ENCODE measurements at regions of chr17 and their contacts with region 1.

Region 1: GRCh38 chr17:6591599-6592158 is 35.3 kb upstream of the PITPNM3 start:
- DNase-seq: peak; percentile 95
- H3K4me3 Mint-ChIP-seq: peak overlapping the region; percentile 8
- H3K27ac Mint-ChIP-seq: peak overlapping the region; percentile 64
- H3K4me1 Mint-ChIP-seq: peaks cover 21% of the 10 kb centered on the region
- H3K27me3 Mint-ChIP-seq: no peaks in the 10 kb centered on the region
- CTCF ChIP-seq: no peak

Region 2: GRCh38 chr17:6374761-6375312 is 216.8 kb before region 1 on chr17:
- CTCF ChIA-PET with region 1: no interaction called
- POLR2A ChIA-PET with region 1: no interaction called
- intact Hi-C with region 1: no loop called
- DNase-seq: peak; percentile 63
- H3K4me3 Mint-ChIP-seq: no peak overlapping the region
- H3K27ac Mint-ChIP-seq: no peak overlapping the region
- H3K4me1 Mint-ChIP-seq: peaks cover 13% of the 10 kb centered on the region
- H3K27me3 Mint-ChIP-seq: peaks cover 11% of the 10 kb centered on the region
- CTCF ChIP-seq: no peak

Region 3: GRCh38 chr17:6507535-6507934 is 84.1 kb before region 1 on chr17:
- CTCF ChIA-PET with region 1: interaction called, 3 read pairs
- POLR2A ChIA-PET with region 1: interaction called, 11 read pairs
- intact Hi-C with region 1: no loop called
- DNase-seq: peak; percentile 95
- H3K4me3 Mint-ChIP-seq: peak overlapping the region; percentile 38
- H3K27ac Mint-ChIP-seq: peak overlapping the region; percentile 90
- H3K4me1 Mint-ChIP-seq: peaks cover 32% of the 10 kb centered on the region
- H3K27me3 Mint-ChIP-seq: no peaks in the 10 kb centered on the region
- CTCF ChIP-seq: no peak

Region 4: GRCh38 chr17:6548578-6549330 is 42.9 kb before region 1 on chr17:
- CTCF ChIA-PET with region 1: no interaction called
- POLR2A ChIA-PET with region 1: interaction called, 11 read pairs
- intact Hi-C with region 1: no loop called
- DNase-seq: no peak
- H3K4me3 Mint-ChIP-seq: no peak overlapping the region
- H3K27ac Mint-ChIP-seq: no peak overlapping the region
- H3K4me1 Mint-ChIP-seq: peaks cover 42% of the 10 kb centered on the region
- H3K27me3 Mint-ChIP-seq: no peaks in the 10 kb centered on the region
- CTCF ChIP-seq: no peak

Region 5: GRCh38 chr17:6555331-6556120 is 36.2 kb before region 1 on chr17:
- CTCF ChIA-PET with region 1: interaction called, 3 read pairs
- POLR2A ChIA-PET with region 1: interaction called, 11 read pairs
- intact Hi-C with region 1: loop called (anchors 2 kb)
- DNase-seq: peak; percentile 79
- H3K4me3 Mint-ChIP-seq: peak overlapping the region; percentile 80
- H3K27ac Mint-ChIP-seq: peak overlapping the region; percentile 79
- H3K4me1 Mint-ChIP-seq: peaks cover 45% of the 10 kb centered on the region
- H3K27me3 Mint-ChIP-seq: no peaks in the 10 kb centered on the region
- CTCF ChIP-seq: no peak

Region 6: DNA sequence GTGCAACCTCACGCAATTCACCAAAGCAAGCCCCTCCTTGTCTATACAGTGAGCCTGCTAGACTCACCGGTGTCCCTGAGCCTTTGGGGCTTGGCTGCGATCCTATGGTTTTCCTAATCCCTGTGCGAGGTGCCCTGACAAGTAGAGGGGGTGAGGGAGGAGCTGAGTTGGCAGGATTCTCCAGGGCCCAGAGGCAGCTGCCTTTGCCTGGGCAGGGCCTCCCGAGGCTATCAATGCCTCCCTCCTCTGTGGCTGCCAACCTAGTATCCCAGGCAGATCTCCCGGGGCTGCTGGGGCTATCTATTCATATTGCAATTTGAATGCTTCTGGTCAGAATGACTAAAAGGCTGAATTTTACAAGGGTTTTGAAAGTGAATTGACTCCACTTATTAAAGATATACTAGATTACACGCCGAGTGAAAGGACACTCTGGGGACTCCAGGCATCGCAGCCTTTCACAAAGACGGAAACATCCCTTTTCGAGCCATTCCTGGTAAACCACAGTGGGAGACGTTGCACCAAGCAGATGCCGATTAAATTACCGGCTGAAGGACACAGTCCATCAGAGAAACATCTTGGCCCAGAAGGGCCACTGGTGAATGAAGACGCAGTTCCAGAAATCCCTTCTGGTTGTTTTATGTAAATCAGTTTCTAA is 24.0 kb before region 1 on chr17:
- CTCF ChIA-PET with region 1: interaction called, 3 read pairs
- POLR2A ChIA-PET with region 1: interaction called, 11 read pairs
- intact Hi-C with region 1: no loop called
- DNase-seq: peak; percentile 95
- H3K4me3 Mint-ChIP-seq: no peak overlapping the region
- H3K27ac Mint-ChIP-seq: peak overlapping the region; percentile 63
- H3K4me1 Mint-ChIP-seq: peaks cover 23% of the 10 kb centered on the region
- H3K27me3 Mint-ChIP-seq: no peaks in the 10 kb centered on the region
- CTCF ChIP-seq: no peak

Region 7: DNA sequence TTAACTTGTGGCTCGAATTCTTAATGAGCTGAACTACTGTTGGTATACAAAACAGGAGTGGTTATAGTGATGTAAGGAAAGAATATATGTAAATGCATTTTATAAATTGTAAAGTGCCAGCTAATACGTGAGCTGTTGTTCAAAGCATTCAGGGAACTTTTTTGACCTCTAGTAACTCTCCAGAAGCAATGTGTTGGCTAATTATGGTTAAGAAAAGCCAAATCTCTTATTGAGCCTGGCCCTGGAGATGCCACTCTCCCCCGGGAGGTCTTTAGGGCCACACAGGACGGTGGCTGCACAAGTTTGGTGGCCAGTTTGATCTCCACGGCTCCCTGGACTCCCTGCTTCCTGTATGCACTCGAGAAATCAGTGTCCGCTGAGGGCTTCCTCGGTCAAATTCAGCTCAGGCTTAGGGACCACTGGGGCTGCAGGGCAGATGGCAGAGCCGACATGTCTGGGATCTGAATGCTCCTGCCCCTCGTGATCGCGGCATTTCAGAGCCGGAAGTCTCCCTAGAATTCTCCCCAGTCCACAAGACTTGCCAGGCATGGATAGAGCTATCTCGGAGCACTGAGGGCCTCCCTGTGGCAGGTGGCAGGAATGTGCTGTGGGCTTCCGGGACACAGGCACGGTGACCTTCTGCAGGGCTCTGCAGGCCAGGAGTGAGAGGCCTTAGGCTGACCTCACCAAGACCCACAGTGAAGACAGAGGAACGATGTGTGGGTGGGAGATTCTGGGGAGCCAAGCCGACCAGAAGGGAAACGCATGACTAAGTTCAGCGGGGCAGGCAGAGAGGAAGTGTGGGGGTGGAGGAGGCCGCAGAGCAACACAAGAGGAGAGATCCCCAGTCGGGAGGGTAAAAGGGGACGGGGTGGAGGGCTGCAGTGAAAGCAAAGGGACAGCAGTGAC is 16.7 kb before region 1 on chr17:
- CTCF ChIA-PET with region 1: interaction called, 4 read pairs
- POLR2A ChIA-PET with region 1: interaction called, 38 read pairs
- intact Hi-C with region 1: no loop called
- DNase-seq: peak; percentile 73
- H3K4me3 Mint-ChIP-seq: no peak overlapping the region
- H3K27ac Mint-ChIP-seq: peak overlapping the region; percentile 78
- H3K4me1 Mint-ChIP-seq: peaks cover 28% of the 10 kb centered on the region
- H3K27me3 Mint-ChIP-seq: no peaks in the 10 kb centered on the region
- CTCF ChIP-seq: no peak

Region 8: DNA sequence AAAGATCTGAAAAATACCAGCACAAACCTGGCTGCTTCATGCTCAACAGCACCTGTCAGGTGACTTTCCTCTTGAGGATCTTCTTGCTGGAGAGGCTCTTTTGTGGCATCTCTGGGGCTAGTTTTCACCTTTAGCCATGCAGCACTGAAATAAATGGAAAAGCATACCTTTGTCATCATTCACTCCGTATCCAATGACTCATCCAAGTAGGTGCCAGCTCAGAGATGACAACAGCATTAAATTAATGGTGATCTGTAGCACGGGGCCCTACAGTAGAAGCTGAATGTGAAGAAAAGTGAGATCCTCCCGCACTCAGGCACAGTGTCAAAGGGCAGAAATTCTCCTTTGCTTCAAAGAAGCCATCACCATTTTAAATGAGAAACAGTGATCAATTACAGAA is 16.6 kb after region 1 on chr17:
- CTCF ChIA-PET with region 1: interaction called, 5 read pairs
- POLR2A ChIA-PET with region 1: interaction called, 24 read pairs
- intact Hi-C with region 1: no loop called
- DNase-seq: peak; percentile 63
- H3K4me3 Mint-ChIP-seq: no peak overlapping the region
- H3K27ac Mint-ChIP-seq: no peak overlapping the region
- H3K4me1 Mint-ChIP-seq: peaks cover 11% of the 10 kb centered on the region
- H3K27me3 Mint-ChIP-seq: no peaks in the 10 kb centered on the region
- CTCF ChIP-seq: no peak

Region 9: DNA sequence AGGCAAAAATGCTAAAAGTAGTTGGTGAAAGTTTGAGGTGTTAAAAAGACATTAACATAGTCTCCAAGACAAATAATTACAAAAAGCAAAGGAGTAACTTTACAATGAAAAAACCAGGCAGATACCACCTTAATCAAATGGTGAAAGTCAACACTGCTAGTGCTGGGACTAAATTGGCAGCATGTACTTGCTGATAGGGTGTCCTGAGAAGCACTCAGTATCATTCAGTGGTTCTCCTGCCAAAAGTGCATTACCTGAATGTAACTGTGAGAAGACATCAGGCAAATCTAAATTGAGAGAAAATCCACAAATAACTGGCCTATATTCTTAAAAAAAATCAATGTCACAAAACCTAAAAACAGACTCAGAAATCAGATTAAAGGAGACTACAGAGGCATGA is 40.9 kb after region 1 on chr17:
- CTCF ChIA-PET with region 1: no interaction called
- POLR2A ChIA-PET with region 1: no interaction called
- intact Hi-C with region 1: no loop called
- DNase-seq: no peak
- H3K4me3 Mint-ChIP-seq: no peak overlapping the region
- H3K27ac Mint-ChIP-seq: no peak overlapping the region
- H3K4me1 Mint-ChIP-seq: peaks cover 12% of the 10 kb centered on the region
- H3K27me3 Mint-ChIP-seq: no peaks in the 10 kb centered on the region
- CTCF ChIP-seq: no peak

Region 10: GRCh38 chr17:6666077-6666521 is 74.4 kb after region 1 on chr17:
- CTCF ChIA-PET with region 1: no interaction called
- POLR2A ChIA-PET with region 1: no interaction called
- intact Hi-C with region 1: no loop called
- DNase-seq: peak; percentile 86
- H3K4me3 Mint-ChIP-seq: no peak overlapping the region
- H3K27ac Mint-ChIP-seq: no peak overlapping the region
- H3K4me1 Mint-ChIP-seq: peaks cover 30% of the 10 kb centered on the region
- H3K27me3 Mint-ChIP-seq: peaks cover 5% of the 10 kb centered on the region
- CTCF ChIP-seq: peak; percentile 93